ENCODE measurements at regions of chr19 and their contacts with region 1.

Region 1: GRCh38 chr19:38647368-38647965 is at the start of gene ACTN4:
- DNase-seq: peak; percentile 91
- ATAC-seq: peak; percentile 69
- H3K4me3 ChIP-seq: peak within 1 kb of the TSS; percentile 84 to 100 (median 100)
- H3K27ac ChIP-seq: peak within 1 kb of the TSS; percentile 92
- H3K4me1 ChIP-seq: peaks cover 32% of the 10 kb centered on the region
- H3K27me3 ChIP-seq: peaks cover 0 to 4% of the 10 kb centered on the region in 2 experiments; a peak in 2 of 5 replicates
- CTCF ChIP-seq: no peak
- EP300 ChIP-seq: peak in 1 of 2 experiments; percentile 26; a peak in 1 of 4 replicates
- POLR2A ChIP-seq: peak; percentile 97
- RAD21 ChIP-seq: peak; percentile 75
- total RNA-seq, gene ACTN4: 167 and 192 TPM in 2 replicates

Region 2: GRCh38 chr19:38527466-38528136 is 119.9 kb before region 1 on chr19:
- CTCF ChIA-PET with region 1: no interaction called
- POLR2A ChIA-PET with region 1: no interaction called
- in situ Hi-C with region 1: no loop called
- intact Hi-C with region 1: no loop called
- DNase-seq: no peak
- ATAC-seq: no peak
- H3K4me3 ChIP-seq: 0 out of 6 replicates have a peak overlapping the region, but pooled peaks of 1 of the 3 experiments have one; percentile 40
- H3K27ac ChIP-seq: no peak overlapping the region
- H3K4me1 ChIP-seq: no peaks in the 10 kb centered on the region
- H3K27me3 ChIP-seq: peaks cover 1 to 5% of the 10 kb centered on the region in 2 experiments; a peak in 3 of 5 replicates
- CTCF ChIP-seq: no peak
- EP300 ChIP-seq: no peak
- POLR2A ChIP-seq: no peak
- RAD21 ChIP-seq: no peak

Region 3: GRCh38 chr19:38559428-38560401 is 87.8 kb before region 1 on chr19:
- CTCF ChIA-PET with region 1: no interaction called
- POLR2A ChIA-PET with region 1: no interaction called
- in situ Hi-C with region 1: no loop called
- intact Hi-C with region 1: no loop called
- DNase-seq: no peak
- ATAC-seq: no peak
- H3K4me3 ChIP-seq: no peak overlapping the region
- H3K27ac ChIP-seq: no peak overlapping the region
- H3K4me1 ChIP-seq: no peaks in the 10 kb centered on the region
- H3K27me3 ChIP-seq: peaks cover 0 to 4% of the 10 kb centered on the region in 2 experiments; a peak in 2 of 5 replicates
- CTCF ChIP-seq: no peak
- EP300 ChIP-seq: no peak
- POLR2A ChIP-seq: no peak
- RAD21 ChIP-seq: no peak

Region 4: GRCh38 chr19:38618590-38619360 is 28.7 kb before region 1 on chr19 and contains the start of gene EIF3K:
- CTCF ChIA-PET with region 1: no interaction called
- POLR2A ChIA-PET with region 1: interaction called, 21 read pairs
- in situ Hi-C with region 1: no loop called
- intact Hi-C with region 1: no loop called
- DNase-seq: peak; percentile 97
- ATAC-seq: peak; percentile 91
- H3K4me3 ChIP-seq: peak within 1 kb of the TSS; percentile 92 to 95 (median 94)
- H3K27ac ChIP-seq: peak within 1 kb of the TSS; percentile 66
- H3K4me1 ChIP-seq: peaks cover 36% of the 10 kb centered on the region
- H3K27me3 ChIP-seq: no peaks in the 10 kb centered on the region; a peak in 2 of 5 replicates
- CTCF ChIP-seq: no peak
- EP300 ChIP-seq: no peak
- POLR2A ChIP-seq: peak; percentile 76 to 88
- RAD21 ChIP-seq: no peak
- total RNA-seq, gene EIF3K: 258 and 351 TPM in 2 replicates

Region 5: DNA sequence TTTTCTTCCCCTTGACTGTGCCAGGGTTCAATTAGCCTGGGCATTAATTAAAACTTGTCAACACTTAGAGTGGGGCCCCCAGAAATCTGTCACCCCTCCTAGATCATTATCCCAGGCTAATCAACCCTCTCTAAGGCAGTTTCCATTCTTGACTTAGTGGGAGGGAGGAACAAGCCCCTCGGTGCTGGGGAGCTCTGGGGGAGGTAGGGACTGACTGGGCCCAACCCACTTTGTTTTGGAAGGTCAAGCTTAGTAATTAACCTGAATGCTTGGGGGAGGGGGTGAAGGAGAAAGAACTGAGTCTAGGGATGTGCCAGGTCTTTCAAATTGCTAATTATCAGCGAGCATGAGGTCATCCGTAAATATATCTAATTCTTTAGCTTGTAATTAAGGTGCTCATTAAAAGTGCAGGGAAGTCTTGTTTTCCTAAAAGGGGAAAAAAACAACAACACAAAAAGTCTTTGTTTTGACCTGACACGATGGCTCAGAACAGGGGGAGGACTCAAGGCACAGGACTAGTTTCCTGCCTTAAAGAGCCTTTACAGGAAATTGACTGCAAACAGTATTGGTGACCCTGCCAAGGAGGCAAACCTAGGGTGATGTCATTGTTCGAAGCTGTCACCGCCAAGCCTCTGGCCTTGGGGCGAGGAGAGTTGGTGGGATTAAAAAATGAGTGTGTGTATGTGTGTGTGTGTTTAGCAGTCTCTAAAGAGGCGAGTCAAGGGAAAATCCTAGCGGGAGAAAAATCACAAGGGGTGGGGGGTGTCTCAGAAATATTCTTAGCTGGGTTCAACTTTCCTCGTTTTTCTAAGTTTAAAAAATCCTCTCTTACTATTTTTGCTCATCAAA is 19.4 kb after region 1 on chr19:
- CTCF ChIA-PET with region 1: no interaction called
- POLR2A ChIA-PET with region 1: interaction called, 36 read pairs
- in situ Hi-C with region 1: no loop called
- intact Hi-C with region 1: no loop called
- DNase-seq: no peak
- ATAC-seq: no peak
- H3K4me3 ChIP-seq: no peak overlapping the region
- H3K27ac ChIP-seq: peak overlapping the region; percentile 38
- H3K4me1 ChIP-seq: peaks cover 100% of the 10 kb centered on the region
- H3K27me3 ChIP-seq: no peaks in the 10 kb centered on the region
- CTCF ChIP-seq: no peak
- EP300 ChIP-seq: no peak
- POLR2A ChIP-seq: no peak
- RAD21 ChIP-seq: no peak

Region 6: GRCh38 chr19:38690832-38691231 is 43.4 kb after region 1 on chr19:
- CTCF ChIA-PET with region 1: no interaction called
- POLR2A ChIA-PET with region 1: interaction called, 33 read pairs
- in situ Hi-C with region 1: no loop called
- intact Hi-C with region 1: loop called (anchors 5 kb)
- DNase-seq: no peak
- ATAC-seq: no peak
- H3K4me3 ChIP-seq: no peak overlapping the region
- H3K27ac ChIP-seq: no peak overlapping the region
- H3K4me1 ChIP-seq: peaks cover 100% of the 10 kb centered on the region
- H3K27me3 ChIP-seq: no peaks in the 10 kb centered on the region
- CTCF ChIP-seq: no peak
- EP300 ChIP-seq: no peak
- POLR2A ChIP-seq: no peak
- RAD21 ChIP-seq: no peak

Region 7: GRCh38 chr19:38718747-38719543 is 71.5 kb after region 1 on chr19:
- CTCF ChIA-PET with region 1: no interaction called
- POLR2A ChIA-PET with region 1: interaction called, 13 read pairs
- in situ Hi-C with region 1: no loop called
- intact Hi-C with region 1: loop called (anchors 5 kb)
- DNase-seq: no peak
- ATAC-seq: peak; percentile 9; the same call in 2 of the 3 replicates
- H3K4me3 ChIP-seq: no peak overlapping the region
- H3K27ac ChIP-seq: no peak overlapping the region
- H3K4me1 ChIP-seq: peaks cover 50% of the 10 kb centered on the region
- H3K27me3 ChIP-seq: no peaks in the 10 kb centered on the region
- CTCF ChIP-seq: peak; percentile 58
- EP300 ChIP-seq: no peak
- POLR2A ChIP-seq: no peak
- RAD21 ChIP-seq: peak; percentile 46; the same call in 1 of the 2 replicates